ENCODE measurements at regions of chr4 and their contacts with region 1.

Region 1: GRCh38 chr4:81405894-81406401 is 65.8 kb downstream of the RASGEF1B start:
- DNase-seq: peak; percentile 73 to 89 (median 84)
- H3K4me3 ChIP-seq: peak overlapping the region in 4 of 7 experiments; percentile 5 to 57 (median 46)
- H3K27ac ChIP-seq: no peak overlapping the region
- H3K4me1 ChIP-seq: peaks cover 0 to 9% (median 6%) of the 10 kb centered on the region in 4 experiments
- H3K27me3 ChIP-seq: no peaks in the 10 kb centered on the region

Region 2: DNA sequence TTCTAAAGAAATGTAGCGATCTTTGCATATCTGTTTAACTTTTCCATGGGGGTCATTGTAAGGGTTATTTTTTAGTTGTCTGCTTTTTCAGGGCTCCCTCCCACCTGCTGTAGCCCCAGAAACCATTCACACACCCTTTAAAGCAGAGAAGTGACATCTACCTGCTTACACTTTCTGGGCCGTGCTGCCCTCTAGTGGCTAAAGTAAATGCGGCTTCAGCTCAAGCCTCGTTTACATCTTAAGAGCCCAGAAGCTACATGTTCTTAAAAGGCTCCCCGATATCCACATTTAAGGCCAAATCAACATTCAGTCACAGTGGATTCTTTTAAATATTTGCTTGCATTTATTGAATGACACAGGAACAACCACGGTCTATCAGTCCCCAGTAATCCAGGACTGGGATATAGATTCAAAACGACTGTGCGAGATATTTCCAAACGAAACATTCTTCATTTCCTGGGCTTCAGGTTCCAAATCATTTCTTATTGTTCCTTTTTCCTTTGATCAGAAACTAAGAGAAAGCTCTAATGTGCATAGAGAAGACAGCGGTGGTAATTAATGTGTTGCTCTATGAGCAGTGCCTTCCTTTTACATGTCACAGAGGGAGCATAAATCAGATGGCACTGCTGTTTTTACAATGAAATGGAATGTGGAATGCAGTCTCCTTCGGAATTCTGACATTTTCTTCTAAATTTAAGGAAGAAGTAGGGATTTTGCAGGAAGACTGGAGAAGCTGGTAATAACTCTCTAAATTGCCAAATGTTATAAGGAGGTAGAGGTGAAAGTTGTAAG is 54.1 kb before region 1 on chr4:
- CTCF ChIA-PET with region 1: no interaction called
- POLR2A ChIA-PET with region 1: no interaction called
- DNase-seq: peak; percentile 88 to 91 (median 88)
- H3K4me3 ChIP-seq: peak overlapping the region in 2 of 7 experiments; percentile 40 to 48
- H3K27ac ChIP-seq: no peak overlapping the region
- H3K4me1 ChIP-seq: peaks cover 0 to 13% (median 6%) of the 10 kb centered on the region in 4 experiments
- H3K27me3 ChIP-seq: no peaks in the 10 kb centered on the region

Region 3: DNA sequence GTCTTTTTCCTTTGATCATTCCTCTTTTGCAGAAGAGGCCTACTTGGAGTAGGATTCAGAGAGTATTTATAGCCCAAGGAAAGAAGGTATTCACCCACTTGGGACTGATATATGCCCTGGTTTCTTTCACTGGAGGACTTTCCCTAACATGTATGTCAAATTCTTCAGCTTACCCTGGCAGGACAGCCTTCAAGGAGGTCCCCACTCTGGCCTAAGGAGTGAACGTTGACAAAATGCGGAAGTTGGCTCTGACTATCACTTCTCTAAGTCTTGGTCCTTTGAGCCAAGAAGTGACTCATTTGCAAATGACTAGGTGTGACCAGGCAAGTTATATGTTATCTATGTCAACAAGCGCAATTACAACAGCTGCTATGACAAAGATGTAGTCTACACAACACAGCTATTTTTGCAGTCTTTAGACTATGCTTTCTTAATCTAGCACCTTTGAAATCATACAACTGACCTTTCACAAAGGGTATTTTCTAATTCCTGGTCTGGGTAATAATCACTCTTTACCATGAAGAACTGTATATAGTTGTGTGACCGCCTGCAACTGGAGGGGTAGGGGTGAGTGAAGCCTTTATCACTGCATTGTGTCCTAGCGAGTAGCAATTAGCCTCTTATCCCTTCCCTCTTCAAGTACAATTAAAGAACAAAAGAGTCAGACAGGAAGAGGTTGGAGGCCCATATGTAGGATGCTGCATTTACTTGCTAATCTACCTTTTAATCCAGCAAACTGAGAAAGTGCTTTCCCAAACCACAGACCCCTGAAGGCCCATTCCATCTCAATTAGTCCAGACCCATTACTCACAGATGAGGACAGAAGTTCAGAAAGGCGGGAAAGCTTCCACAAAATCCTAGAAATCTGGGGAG is 15.6 kb after region 1 on chr4:
- CTCF ChIA-PET with region 1: interaction called, 20 read pairs
- POLR2A ChIA-PET with region 1: no interaction called
- DNase-seq: peak; percentile 87 to 99 (median 97)
- H3K4me3 ChIP-seq: no peak overlapping the region
- H3K27ac ChIP-seq: peak overlapping the region; percentile 26 to 72
- H3K4me1 ChIP-seq: peaks cover 0 to 12% (median 6%) of the 10 kb centered on the region in 4 experiments
- H3K27me3 ChIP-seq: no peaks in the 10 kb centered on the region

Region 4: DNA sequence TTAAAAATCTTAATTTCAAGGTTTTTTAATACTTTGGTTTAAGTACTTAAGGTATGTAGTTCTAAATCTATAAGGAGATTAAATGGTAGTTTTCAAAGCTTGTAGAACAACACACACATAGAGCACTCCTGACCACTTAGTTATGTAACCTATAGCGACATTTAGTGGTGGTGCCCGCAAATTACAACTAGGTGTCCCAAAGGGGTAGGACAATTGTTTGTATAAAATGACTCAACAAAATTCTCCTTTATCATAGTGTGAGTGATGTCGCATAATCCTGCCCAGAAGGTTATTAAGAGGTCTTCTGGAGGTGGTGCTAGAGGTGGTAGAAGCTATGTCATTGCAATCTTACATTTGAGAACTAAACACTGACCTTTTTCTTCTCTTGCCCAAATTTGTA is 438.8 kb after region 1 on chr4:
- CTCF ChIA-PET with region 1: interaction called, 10 read pairs
- POLR2A ChIA-PET with region 1: no interaction called
- DNase-seq: peak; percentile 86 to 96 (median 94)
- H3K4me3 ChIP-seq: no peak overlapping the region
- H3K27ac ChIP-seq: no peak overlapping the region
- H3K4me1 ChIP-seq: peaks cover 0 to 8% (median 2%) of the 10 kb centered on the region in 4 experiments
- H3K27me3 ChIP-seq: no peaks in the 10 kb centered on the region

Region 5: GRCh38 chr4:82201805-82202641 is 796.1 kb after region 1 on chr4:
- CTCF ChIA-PET with region 1: interaction called, 13 read pairs
- POLR2A ChIA-PET with region 1: no interaction called
- DNase-seq: peak; percentile 56 to 78 (median 76)
- H3K4me3 ChIP-seq: no peak overlapping the region
- H3K27ac ChIP-seq: no peak overlapping the region
- H3K4me1 ChIP-seq: no peaks in the 10 kb centered on the region
- H3K27me3 ChIP-seq: no peaks in the 10 kb centered on the region